ENCODE measurements at regions of chr14 and their contacts with region 1.

Region 1: GRCh38 chr14:94026173-94026888 is at the start of gene OTUB2:
- DNase-seq: peak; percentile 96
- H3K4me3 Mint-ChIP-seq: peak within 1 kb of the TSS; percentile 85
- H3K27ac Mint-ChIP-seq: peak within 1 kb of the TSS; percentile 60
- H3K4me1 Mint-ChIP-seq: peaks cover 39% of the 10 kb centered on the region
- H3K27me3 Mint-ChIP-seq: no peaks in the 10 kb centered on the region
- total RNA-seq, gene OTUB2: 1.5 TPM in 2 replicates

Region 2: GRCh38 chr14:93970549-93970946 is 55.8 kb before region 1 on chr14:
- intact Hi-C with region 1: loop called (anchors 1 kb)
- DNase-seq: no peak
- H3K4me3 Mint-ChIP-seq: peak overlapping the region; percentile 84
- H3K27ac Mint-ChIP-seq: peak overlapping the region; percentile 96
- H3K4me1 Mint-ChIP-seq: peaks cover 91% of the 10 kb centered on the region
- H3K27me3 Mint-ChIP-seq: no peaks in the 10 kb centered on the region

Region 3: GRCh38 chr14:94001501-94002396 is 24.6 kb before region 1 on chr14:
- intact Hi-C with region 1: loop called (anchors 2 kb)
- DNase-seq: peak; percentile 56
- H3K4me3 Mint-ChIP-seq: peak overlapping the region; percentile 1
- H3K27ac Mint-ChIP-seq: peak overlapping the region; percentile 36
- H3K4me1 Mint-ChIP-seq: peaks cover 39% of the 10 kb centered on the region
- H3K27me3 Mint-ChIP-seq: peaks cover 2% of the 10 kb centered on the region

Region 4: GRCh38 chr14:94129111-94129757 is 102.9 kb after region 1 on chr14 and contains the start of gene IFI27L2:
- intact Hi-C with region 1: loop called (anchors 1 kb)
- DNase-seq: peak; percentile 59
- H3K4me3 Mint-ChIP-seq: peak within 1 kb of the TSS; percentile 87
- H3K27ac Mint-ChIP-seq: peak within 1 kb of the TSS; percentile 86
- H3K4me1 Mint-ChIP-seq: peaks cover 26% of the 10 kb centered on the region
- H3K27me3 Mint-ChIP-seq: peaks cover 20% of the 10 kb centered on the region
- total RNA-seq, gene IFI27L2: 33.5 and 36.1 TPM in 2 replicates